PC-3 (cell line): ENCODE measurements at regions of chr9 and their contacts with region 1.

Region 1: DNA sequence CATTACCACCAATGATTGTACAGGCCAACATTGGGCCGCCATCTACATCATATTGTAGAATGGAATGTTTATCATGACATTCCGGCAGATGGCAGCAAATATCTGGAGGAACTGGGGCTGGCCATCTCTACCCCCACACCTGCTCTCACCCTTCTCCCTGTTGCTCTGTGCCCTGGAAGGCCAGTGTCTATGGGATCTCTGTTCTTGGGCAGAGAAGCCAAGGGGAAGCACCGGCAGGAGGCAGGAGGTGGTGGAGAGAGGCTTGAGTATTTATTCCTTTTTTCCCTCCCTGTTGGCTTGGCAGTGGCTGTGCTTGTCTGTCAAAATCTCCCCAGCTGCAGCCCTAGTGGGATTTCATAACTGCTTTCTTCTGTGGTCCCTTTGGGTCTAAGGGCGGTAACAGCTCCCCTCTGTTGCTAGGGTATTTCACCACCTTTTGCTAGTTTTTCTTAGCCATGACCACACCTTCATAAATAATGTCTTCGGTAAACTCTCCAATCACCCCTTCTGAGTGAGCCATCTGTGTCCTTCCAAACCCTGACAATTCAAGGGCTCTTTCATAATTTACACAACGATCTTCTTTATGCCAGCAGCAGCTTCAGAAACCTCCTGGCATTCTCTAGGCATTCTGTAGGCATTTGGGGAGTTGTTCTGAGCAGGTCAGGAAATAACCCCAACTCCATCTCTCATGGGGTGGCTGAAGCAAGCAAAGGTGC is 225.8 kb downstream of the MELK start:
- DNase-seq: peak; percentile 48
- ATAC-seq: peak; percentile 64
- H3K4me3 ChIP-seq: no peak overlapping the region
- H3K27ac ChIP-seq: no peak overlapping the region
- H3K4me1 ChIP-seq: no peaks in the 10 kb centered on the region
- H3K27me3 ChIP-seq: peaks cover 28% of the 10 kb centered on the region
- CTCF ChIP-seq: peak; percentile 51

Region 2: DNA sequence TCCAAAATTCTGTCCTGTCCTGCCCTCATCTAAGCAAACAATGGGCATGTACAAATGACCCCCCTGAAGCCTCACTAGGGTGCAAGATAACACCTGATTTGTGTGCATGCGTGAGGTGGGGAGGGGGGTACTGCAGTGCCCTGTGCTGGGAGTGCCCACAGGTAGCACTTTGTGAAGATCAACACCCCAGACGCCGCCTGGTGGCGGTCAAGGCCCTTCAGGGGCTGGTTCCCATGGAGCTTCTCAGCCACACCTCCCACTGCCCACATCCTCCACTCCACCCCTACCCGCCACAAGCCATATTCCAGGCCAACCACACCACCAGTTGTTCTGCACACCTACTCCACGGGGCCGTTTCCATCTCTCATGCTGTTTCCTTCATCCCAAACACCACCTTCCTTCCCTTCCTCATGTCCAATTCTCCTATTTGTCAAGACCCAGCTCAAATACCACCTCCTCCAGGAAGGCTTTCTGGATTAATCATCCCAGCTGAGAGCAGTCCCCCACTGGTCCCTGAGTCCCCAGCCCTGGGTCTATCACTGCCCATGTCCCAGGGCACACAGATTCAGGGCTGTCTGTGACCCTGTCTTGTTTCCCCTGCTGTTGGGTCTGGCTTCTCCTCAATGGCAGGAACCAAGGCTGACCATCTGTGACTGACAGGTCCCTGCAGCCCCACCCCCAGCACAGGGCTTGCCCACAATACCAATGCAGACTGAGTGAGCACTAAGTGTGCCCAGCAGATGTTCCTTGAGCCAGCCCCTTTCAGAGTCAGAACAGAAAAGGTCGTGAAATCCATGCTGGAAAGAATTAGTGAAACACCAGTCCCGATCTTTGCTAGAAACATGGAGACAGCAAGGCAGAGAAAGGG is 57.2 kb after region 1 on chr9:
- CTCF ChIA-PET with region 1: no interaction called
- POLR2A ChIA-PET with region 1: no interaction called
- intact Hi-C with region 1: loop called (anchors 10 kb)
- DNase-seq: peak; percentile 57
- ATAC-seq: peak; percentile 87
- H3K4me3 ChIP-seq: no peak overlapping the region
- H3K27ac ChIP-seq: no peak overlapping the region
- H3K4me1 ChIP-seq: no peaks in the 10 kb centered on the region
- H3K27me3 ChIP-seq: no peaks in the 10 kb centered on the region
- CTCF ChIP-seq: peak; percentile 52

Region 3: GRCh38 chr9:36903541-36904435 is 105.3 kb after region 1 on chr9:
- CTCF ChIA-PET with region 1: no interaction called
- POLR2A ChIA-PET with region 1: no interaction called
- intact Hi-C with region 1: no loop called
- DNase-seq: peak; percentile 88
- ATAC-seq: peak; percentile 61
- H3K4me3 ChIP-seq: no peak overlapping the region
- H3K27ac ChIP-seq: no peak overlapping the region
- H3K4me1 ChIP-seq: peaks cover 10% of the 10 kb centered on the region; the same call in 1 of the 2 replicates
- H3K27me3 ChIP-seq: peaks cover 31% of the 10 kb centered on the region
- CTCF ChIP-seq: no peak